ENCODE measurements at regions of chr6 and their contacts with region 1.

Region 1: GRCh38 chr6:164927288-164928056 is 381.9 kb downstream of the C6orf118 start:
- DNase-seq: peak; percentile 23
- H3K4me3 ChIP-seq: no peak overlapping the region
- H3K27ac ChIP-seq: no peak overlapping the region
- H3K4me1 ChIP-seq: no peaks in the 10 kb centered on the region
- H3K27me3 ChIP-seq: no peaks in the 10 kb centered on the region
- CTCF ChIP-seq: peak; percentile 82 to 96

Region 2: GRCh38 chr6:165231581-165232561 is 304.4 kb after region 1 on chr6:
- CTCF ChIA-PET with region 1: no interaction called
- dilution Hi-C with region 1: no loop called
- in situ Hi-C with region 1: no loop called
- intact Hi-C with region 1: loop called (anchors 1 kb)
- DNase-seq: peak; percentile 0
- H3K4me3 ChIP-seq: no peak overlapping the region
- H3K27ac ChIP-seq: no peak overlapping the region
- H3K4me1 ChIP-seq: no peaks in the 10 kb centered on the region
- H3K27me3 ChIP-seq: no peaks in the 10 kb centered on the region
- CTCF ChIP-seq: peak; percentile 45 to 58

Region 3: GRCh38 chr6:165245287-165245686 is 317.8 kb after region 1 on chr6:
- CTCF ChIA-PET with region 1: no interaction called
- dilution Hi-C with region 1: no loop called
- in situ Hi-C with region 1: no loop called
- intact Hi-C with region 1: loop called (anchors 5 kb)
- DNase-seq: no peak
- H3K4me3 ChIP-seq: no peak overlapping the region
- H3K27ac ChIP-seq: no peak overlapping the region
- H3K4me1 ChIP-seq: no peaks in the 10 kb centered on the region
- H3K27me3 ChIP-seq: no peaks in the 10 kb centered on the region
- CTCF ChIP-seq: peak; percentile 11 to 42

Region 4: GRCh38 chr6:165260462-165260861 is 333.0 kb after region 1 on chr6:
- CTCF ChIA-PET with region 1: no interaction called
- dilution Hi-C with region 1: no loop called
- in situ Hi-C with region 1: no loop called
- intact Hi-C with region 1: no loop called
- DNase-seq: no peak
- H3K4me3 ChIP-seq: no peak overlapping the region
- H3K27ac ChIP-seq: no peak overlapping the region
- H3K4me1 ChIP-seq: no peaks in the 10 kb centered on the region
- H3K27me3 ChIP-seq: no peaks in the 10 kb centered on the region
- CTCF ChIP-seq: no peak

Region 5: DNA sequence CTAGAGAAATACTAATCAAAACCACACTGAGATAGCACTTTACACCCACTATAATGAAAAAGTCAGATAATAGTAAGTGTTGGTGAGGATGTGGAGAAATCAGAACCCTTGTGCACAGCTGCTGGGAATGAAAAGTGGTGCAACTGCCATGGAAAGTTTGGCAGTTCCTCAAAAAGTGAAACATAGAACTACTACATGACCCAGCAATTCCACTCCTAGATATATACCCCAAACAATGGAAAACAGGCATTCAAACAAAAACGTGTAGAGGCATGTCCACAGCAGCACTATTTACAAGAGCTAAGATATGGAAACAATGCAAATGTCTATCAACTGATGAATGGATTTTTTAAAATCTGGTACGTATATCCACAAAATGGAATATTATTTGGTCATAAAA is 499.4 kb after region 1 on chr6:
- CTCF ChIA-PET with region 1: no interaction called
- dilution Hi-C with region 1: no loop called
- in situ Hi-C with region 1: no loop called
- intact Hi-C with region 1: no loop called
- DNase-seq: no peak
- H3K4me3 ChIP-seq: no peak overlapping the region
- H3K27ac ChIP-seq: no peak overlapping the region
- H3K4me1 ChIP-seq: no peaks in the 10 kb centered on the region
- H3K27me3 ChIP-seq: no peaks in the 10 kb centered on the region
- CTCF ChIP-seq: no peak